Endothelial cell of umbilical vein (primary cell): ENCODE measurements at regions of chr20 and their contacts with region 1.

Region 1: GRCh38 chr20:10553326-10553984 is 118.3 kb downstream of the SLX4IP start:
- DNase-seq: peak; percentile 84
- H3K4me3 ChIP-seq: no peak overlapping the region
- H3K27ac ChIP-seq: no peak overlapping the region
- H3K4me1 ChIP-seq: peaks cover 15% of the 10 kb centered on the region
- H3K27me3 ChIP-seq: no peaks in the 10 kb centered on the region
- CTCF ChIP-seq: peak; percentile 64 to 70
- POLR2A ChIP-seq: no peak

Region 2: DNA sequence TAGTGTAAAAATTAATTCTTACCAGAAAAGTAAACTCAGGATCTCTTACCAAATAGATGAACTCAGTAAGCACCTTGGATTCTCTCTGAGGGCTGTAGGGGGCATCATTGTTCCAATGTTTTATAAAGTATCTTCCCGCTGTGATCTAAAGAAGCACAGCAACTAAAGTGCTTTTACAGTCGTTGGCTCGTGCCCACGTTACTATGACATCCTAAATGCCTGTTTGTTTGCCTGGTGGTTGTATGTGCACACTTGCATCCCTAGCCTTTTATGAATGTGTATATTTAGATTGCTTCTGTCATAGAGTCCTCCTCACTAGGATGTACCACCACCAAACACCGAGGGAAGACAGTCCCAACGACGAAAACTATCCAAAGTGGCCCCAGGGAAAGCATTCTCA is 83.9 kb before region 1 on chr20:
- CTCF ChIA-PET with region 1: interaction called, 15 read pairs
- POLR2A ChIA-PET with region 1: no interaction called
- dilution Hi-C with region 1: no loop called
- intact Hi-C with region 1: no loop called
- DNase-seq: peak; percentile 90
- H3K4me3 ChIP-seq: no peak overlapping the region
- H3K27ac ChIP-seq: peak overlapping the region; percentile 9
- H3K4me1 ChIP-seq: peaks cover 40% of the 10 kb centered on the region
- H3K27me3 ChIP-seq: no peaks in the 10 kb centered on the region
- CTCF ChIP-seq: peak; percentile 49 to 50
- POLR2A ChIP-seq: no peak

Region 3: GRCh38 chr20:10636326-10636818 is 82.9 kb after region 1 on chr20:
- CTCF ChIA-PET with region 1: interaction called, 11 read pairs
- POLR2A ChIA-PET with region 1: no interaction called
- dilution Hi-C with region 1: no loop called
- intact Hi-C with region 1: no loop called
- DNase-seq: peak; percentile 73
- H3K4me3 ChIP-seq: no peak overlapping the region
- H3K27ac ChIP-seq: no peak overlapping the region
- H3K4me1 ChIP-seq: peaks cover 38% of the 10 kb centered on the region
- H3K27me3 ChIP-seq: no peaks in the 10 kb centered on the region
- CTCF ChIP-seq: no peak
- POLR2A ChIP-seq: no peak

Region 4: DNA sequence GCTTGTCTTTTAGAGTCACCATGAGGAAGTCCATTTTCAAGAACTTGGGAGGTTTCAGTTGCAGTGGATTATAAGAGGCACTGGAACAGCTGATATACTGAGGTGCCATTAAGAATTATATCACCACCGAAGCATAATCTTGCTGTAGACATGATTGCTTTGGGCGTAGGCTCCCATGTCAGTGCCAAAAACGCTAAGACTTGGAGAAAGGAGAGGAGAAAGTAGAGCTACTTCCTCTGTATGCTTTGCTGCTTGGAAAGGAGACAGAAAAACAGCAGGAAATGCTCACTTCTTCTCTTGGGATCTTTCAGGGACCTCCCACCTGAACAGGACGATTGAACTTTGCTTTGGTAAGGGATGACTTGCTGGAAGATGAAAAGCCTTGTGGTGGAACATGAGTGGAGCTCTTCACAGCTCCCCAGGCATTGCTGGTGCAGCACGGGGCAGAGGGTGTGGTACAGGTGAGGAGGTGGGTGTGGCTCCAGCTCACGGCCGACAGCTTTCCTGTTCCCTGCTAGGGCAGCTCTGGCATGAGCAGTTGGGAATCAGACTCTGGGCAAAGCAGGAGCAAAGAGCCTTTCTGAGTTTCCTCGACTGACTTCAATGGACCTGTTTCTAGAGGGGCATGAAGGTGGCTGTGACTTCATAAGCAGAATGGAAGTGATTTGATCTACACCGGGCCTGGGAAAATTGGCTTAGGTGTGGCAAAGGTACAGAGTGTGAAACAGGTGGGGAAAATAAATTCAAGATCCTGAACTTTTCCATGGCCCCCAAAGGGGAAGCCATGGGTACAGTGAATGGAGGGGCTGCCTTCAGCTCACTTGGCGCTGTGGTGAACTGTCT is 310.8 kb after region 1 on chr20:
- CTCF ChIA-PET with region 1: no interaction called
- POLR2A ChIA-PET with region 1: no interaction called
- dilution Hi-C with region 1: no loop called
- intact Hi-C with region 1: loop called (anchors 10 kb)
- DNase-seq: peak; percentile 48
- H3K4me3 ChIP-seq: no peak overlapping the region
- H3K27ac ChIP-seq: peak overlapping the region; percentile 59
- H3K4me1 ChIP-seq: peaks cover 32% of the 10 kb centered on the region
- H3K27me3 ChIP-seq: no peaks in the 10 kb centered on the region
- CTCF ChIP-seq: no peak
- POLR2A ChIP-seq: no peak

Region 5: DNA sequence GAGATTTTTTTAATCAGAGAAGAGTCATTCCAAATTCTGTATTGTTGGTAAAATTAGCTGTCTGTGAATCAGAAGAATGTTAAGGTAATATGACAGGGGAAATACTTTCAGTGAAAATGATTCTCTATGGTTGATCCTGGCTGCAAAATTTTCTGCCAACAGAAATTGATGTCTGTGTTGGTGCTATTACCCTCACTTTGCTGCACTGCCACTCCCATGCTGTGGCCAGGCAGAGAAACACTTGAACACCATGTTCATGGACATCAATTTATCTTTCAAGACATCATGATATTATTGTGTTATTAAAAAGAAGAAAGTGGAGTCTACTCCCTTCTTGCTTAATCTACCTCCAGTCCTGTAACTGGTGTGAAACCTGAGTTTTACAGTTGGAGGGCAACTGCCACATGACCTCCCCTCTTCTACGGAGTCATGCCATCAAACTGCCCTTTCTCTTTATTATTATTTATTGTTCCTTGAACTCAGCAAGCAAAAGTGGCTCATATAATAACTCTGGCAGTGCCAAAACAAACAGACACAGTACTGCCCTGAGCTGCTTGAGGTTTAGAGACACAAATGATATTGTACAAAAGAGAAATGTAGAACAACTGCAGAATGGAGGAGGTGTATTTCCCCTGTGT is 408.3 kb after region 1 on chr20:
- CTCF ChIA-PET with region 1: no interaction called
- POLR2A ChIA-PET with region 1: no interaction called
- dilution Hi-C with region 1: no loop called
- intact Hi-C with region 1: loop called (anchors 1 kb)
- DNase-seq: peak; percentile 75
- H3K4me3 ChIP-seq: no peak overlapping the region
- H3K27ac ChIP-seq: no peak overlapping the region
- H3K4me1 ChIP-seq: peaks cover 36% of the 10 kb centered on the region
- H3K27me3 ChIP-seq: no peaks in the 10 kb centered on the region
- CTCF ChIP-seq: no peak
- POLR2A ChIP-seq: no peak

Region 6: DNA sequence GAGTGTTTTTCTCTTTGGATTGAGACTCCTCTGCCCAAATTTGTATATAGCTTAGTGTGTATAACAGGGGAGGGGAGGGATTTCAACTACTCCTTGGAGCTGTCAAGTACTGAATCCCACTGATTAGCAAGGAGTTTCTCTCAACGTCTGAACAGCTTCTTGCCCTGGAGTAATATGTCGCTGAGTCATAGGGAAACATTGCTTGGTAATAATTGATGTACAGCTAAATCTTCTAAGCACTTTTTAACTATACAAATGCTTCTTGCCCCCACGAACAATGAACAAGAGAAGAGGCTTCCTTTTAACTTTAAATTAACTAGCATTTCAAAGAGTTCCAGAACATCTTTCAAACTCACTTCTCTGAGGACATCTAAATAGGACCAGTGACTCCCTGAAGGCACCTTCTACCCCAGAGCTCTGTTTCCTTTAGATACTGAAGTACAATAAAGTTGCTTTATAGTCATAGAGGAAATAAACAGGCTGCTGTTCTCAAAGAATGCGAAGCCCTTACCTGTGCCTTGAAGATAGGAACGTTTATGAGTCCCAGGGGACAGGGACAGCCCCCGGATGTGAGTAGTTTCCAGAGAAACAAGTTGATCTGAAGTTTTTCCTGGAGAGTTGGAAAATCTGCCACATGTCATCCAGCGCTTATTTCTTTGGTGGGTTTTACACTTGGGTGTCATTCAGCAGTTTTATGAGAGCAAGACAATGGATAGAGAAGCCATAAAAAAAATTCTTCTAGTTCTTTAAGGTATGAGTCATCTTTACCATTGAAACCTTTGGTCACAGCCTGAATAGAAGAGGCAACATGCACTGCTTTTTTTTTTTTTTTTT is 901.7 kb after region 1 on chr20:
- CTCF ChIA-PET with region 1: no interaction called
- POLR2A ChIA-PET with region 1: no interaction called
- dilution Hi-C with region 1: no loop called
- intact Hi-C with region 1: loop called (anchors 1 kb)
- DNase-seq: peak; percentile 93
- H3K4me3 ChIP-seq: peak overlapping the region in 1 of 3 experiments; percentile 27
- H3K27ac ChIP-seq: peak overlapping the region; percentile 93
- H3K4me1 ChIP-seq: peaks cover 38% of the 10 kb centered on the region
- H3K27me3 ChIP-seq: no peaks in the 10 kb centered on the region
- CTCF ChIP-seq: no peak
- POLR2A ChIP-seq: peak; percentile 10